CD8-positive, alpha-beta memory T cell (primary cell): ENCODE measurements at regions of chr15 and their contacts with region 1.

Region 1: GRCh38 chr15:101258238-101259144 is 6.6 kb upstream of the CHSY1 start:
- DNase-seq: peak; percentile 27 to 64 (median 45)
- H3K4me3 ChIP-seq: no peak overlapping the region
- H3K4me3 Mint-ChIP-seq: peak overlapping the region in 1 of 7 donors; percentile 28
- H3K27ac ChIP-seq: no peak overlapping the region
- H3K27ac Mint-ChIP-seq: no peak overlapping the region
- H3K4me1 ChIP-seq: no peaks in the 10 kb centered on the region
- H3K4me1 Mint-ChIP-seq: peaks cover 0 to 5% (median 2%) of the 10 kb centered on the region in 3 donors
- H3K27me3 ChIP-seq: no peaks in the 10 kb centered on the region
- H3K27me3 Mint-ChIP-seq: peaks cover 10 to 16% of the 10 kb centered on the region in 2 donors

Region 2: DNA sequence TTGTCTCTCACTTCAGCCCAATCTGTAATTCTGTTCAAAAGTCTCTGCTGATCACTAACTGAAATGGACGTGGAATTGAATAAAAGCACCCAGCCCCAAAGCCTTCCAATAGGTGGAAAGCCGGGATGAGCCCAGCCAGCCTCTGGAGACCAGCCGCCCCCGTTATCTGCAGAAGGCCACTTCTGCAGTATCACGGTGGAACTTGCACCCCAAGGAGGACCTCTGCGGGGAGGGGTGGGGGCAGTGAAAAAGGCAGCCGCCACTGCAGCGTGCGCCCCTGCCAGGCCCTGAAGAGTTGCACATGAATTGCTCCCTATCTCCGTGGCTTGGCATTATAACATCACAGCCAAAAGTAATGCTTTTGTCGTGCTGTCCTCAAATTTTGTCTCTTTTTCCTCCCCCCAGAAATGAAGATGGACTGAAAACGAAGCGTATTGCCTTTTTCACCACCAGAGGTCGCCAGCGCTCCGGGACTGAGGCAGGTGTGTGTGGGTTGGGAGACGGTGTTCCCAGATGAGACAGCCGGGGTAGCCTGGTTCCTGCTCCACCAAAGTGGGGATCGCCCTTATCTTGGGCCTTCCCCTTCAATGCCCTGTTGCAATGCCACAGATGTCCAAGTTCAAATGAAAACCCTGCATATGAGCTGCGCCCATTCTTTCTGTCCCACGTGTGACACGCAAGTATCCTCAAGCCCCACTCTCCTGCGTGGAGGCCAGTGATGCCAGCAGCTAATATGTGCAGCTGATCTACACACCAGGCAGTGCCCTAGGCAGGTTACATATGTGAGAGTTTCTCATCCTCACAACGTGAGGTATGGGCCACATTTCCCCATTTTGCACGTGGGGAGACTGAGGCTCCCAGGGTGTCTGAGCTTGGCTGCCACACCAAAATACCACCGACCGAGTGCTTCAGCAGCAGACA is 243.3 kb before region 1 on chr15:
- CTCF ChIA-PET with region 1: interaction called, 30 read pairs
- POLR2A ChIA-PET with region 1: no interaction called
- DNase-seq: peak; percentile 37 to 73 (median 46)
- H3K4me3 ChIP-seq: no peak overlapping the region
- H3K4me3 Mint-ChIP-seq: no peak overlapping the region
- H3K27ac ChIP-seq: no peak overlapping the region
- H3K27ac Mint-ChIP-seq: peak overlapping the region in 2 of 8 donors; percentile 33 to 65
- H3K4me1 ChIP-seq: no peaks in the 10 kb centered on the region
- H3K4me1 Mint-ChIP-seq: no peaks in the 10 kb centered on the region
- H3K27me3 ChIP-seq: no peaks in the 10 kb centered on the region
- H3K27me3 Mint-ChIP-seq: peaks cover 3 to 11% of the 10 kb centered on the region in 2 donors

Region 3: GRCh38 chr15:101088788-101089583 is 169.5 kb before region 1 on chr15:
- CTCF ChIA-PET with region 1: interaction called, 43 read pairs
- POLR2A ChIA-PET with region 1: no interaction called
- DNase-seq: peak; percentile 64 to 79 (median 69)
- H3K4me3 ChIP-seq: no peak overlapping the region
- H3K4me3 Mint-ChIP-seq: no peak overlapping the region
- H3K27ac ChIP-seq: no peak overlapping the region
- H3K27ac Mint-ChIP-seq: no peak overlapping the region
- H3K4me1 ChIP-seq: no peaks in the 10 kb centered on the region
- H3K4me1 Mint-ChIP-seq: peaks cover 0 to 2% (median 0%) of the 10 kb centered on the region in 3 donors
- H3K27me3 ChIP-seq: no peaks in the 10 kb centered on the region
- H3K27me3 Mint-ChIP-seq: peaks cover 5 to 10% of the 10 kb centered on the region in 2 donors

Region 4: GRCh38 chr15:101127506-101128076 is 130.9 kb before region 1 on chr15:
- CTCF ChIA-PET with region 1: interaction called, 12 read pairs
- POLR2A ChIA-PET with region 1: no interaction called
- DNase-seq: peak in 4 of 5 donors; percentile 11 to 60 (median 30)
- H3K4me3 ChIP-seq: peak overlapping the region; percentile 27
- H3K4me3 Mint-ChIP-seq: peak overlapping the region; percentile 4 to 88 (median 63)
- H3K27ac ChIP-seq: peak overlapping the region; percentile 51
- H3K27ac Mint-ChIP-seq: peak overlapping the region; percentile 88 to 98 (median 94)
- H3K4me1 ChIP-seq: peaks cover 24% of the 10 kb centered on the region
- H3K4me1 Mint-ChIP-seq: peaks cover 48 to 58% (median 52%) of the 10 kb centered on the region in 3 donors
- H3K27me3 ChIP-seq: no peaks in the 10 kb centered on the region
- H3K27me3 Mint-ChIP-seq: peaks cover 0 to 1% of the 10 kb centered on the region in 2 donors

Region 5: DNA sequence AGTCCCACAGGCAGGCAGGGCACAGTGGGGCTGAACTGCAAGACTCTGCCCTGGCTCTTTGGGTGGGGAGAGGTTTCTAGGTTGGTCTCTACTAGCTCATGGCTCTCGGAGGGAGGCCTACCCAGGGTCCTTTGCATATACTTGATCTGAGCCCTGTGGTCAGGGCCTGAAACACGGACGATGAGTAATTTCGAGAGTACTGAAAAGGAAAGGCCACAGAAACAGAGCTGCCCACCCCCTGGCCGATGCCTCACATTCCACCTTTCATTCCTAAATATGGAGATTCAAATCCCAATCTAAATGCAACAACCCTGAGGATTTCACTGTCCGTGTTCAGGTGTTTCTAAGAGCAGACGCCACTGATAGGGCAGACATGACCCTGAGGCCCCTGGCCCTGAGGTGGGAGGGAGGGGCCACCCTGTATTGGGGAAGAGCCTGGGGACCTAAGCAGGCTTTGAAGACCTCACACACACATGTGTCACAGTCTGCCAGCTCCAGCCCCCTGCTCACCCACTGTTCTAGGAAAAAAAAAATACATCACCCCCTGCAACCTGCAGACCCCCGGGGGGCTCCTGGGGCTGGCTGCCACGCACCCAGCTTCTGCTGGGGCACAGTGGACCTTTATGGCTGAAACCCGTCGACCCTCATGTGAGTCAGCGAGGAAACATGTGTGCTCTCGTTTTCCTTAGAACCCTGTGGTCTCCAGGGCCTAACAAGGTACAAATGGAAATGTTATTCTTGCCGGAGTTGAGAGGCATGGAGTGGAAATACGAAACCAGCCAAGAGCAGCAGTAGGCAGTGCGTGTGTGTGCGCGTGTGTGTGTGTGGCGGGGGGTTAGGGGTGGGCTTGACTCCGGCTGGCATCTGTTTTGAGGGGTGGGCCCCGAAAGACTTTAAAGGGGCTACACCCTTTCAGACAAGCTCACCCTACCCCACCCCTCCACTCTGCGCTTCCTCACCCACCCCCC is 119.3 kb before region 1 on chr15:
- CTCF ChIA-PET with region 1: no interaction called
- POLR2A ChIA-PET with region 1: no interaction called
- DNase-seq: peak in 1 of 5 donors; percentile 8
- H3K4me3 ChIP-seq: no peak overlapping the region
- H3K4me3 Mint-ChIP-seq: peak overlapping the region in 1 of 7 donors; percentile 33
- H3K27ac ChIP-seq: no peak overlapping the region
- H3K27ac Mint-ChIP-seq: peak overlapping the region in 2 of 8 donors; percentile 31 to 39
- H3K4me1 ChIP-seq: peaks cover 12% of the 10 kb centered on the region
- H3K4me1 Mint-ChIP-seq: peaks cover 25 to 32% (median 31%) of the 10 kb centered on the region in 3 donors
- H3K27me3 ChIP-seq: no peaks in the 10 kb centered on the region
- H3K27me3 Mint-ChIP-seq: peaks cover 0 to 4% of the 10 kb centered on the region in 2 donors

Region 6: GRCh38 chr15:101242160-101242998 is 16.1 kb before region 1 on chr15:
- CTCF ChIA-PET with region 1: interaction called, 38 read pairs
- POLR2A ChIA-PET with region 1: interaction called, 6 read pairs
- DNase-seq: peak; percentile 61 to 84 (median 81)
- H3K4me3 ChIP-seq: peak overlapping the region; percentile 40
- H3K4me3 Mint-ChIP-seq: peak overlapping the region; percentile 63 to 92 (median 81)
- H3K27ac ChIP-seq: peak overlapping the region; percentile 15
- H3K27ac Mint-ChIP-seq: peak overlapping the region; percentile 72 to 99 (median 94)
- H3K4me1 ChIP-seq: peaks cover 74% of the 10 kb centered on the region
- H3K4me1 Mint-ChIP-seq: peaks cover 86 to 98% (median 94%) of the 10 kb centered on the region in 3 donors
- H3K27me3 ChIP-seq: no peaks in the 10 kb centered on the region
- H3K27me3 Mint-ChIP-seq: no peaks in the 10 kb centered on the region

Region 7: DNA sequence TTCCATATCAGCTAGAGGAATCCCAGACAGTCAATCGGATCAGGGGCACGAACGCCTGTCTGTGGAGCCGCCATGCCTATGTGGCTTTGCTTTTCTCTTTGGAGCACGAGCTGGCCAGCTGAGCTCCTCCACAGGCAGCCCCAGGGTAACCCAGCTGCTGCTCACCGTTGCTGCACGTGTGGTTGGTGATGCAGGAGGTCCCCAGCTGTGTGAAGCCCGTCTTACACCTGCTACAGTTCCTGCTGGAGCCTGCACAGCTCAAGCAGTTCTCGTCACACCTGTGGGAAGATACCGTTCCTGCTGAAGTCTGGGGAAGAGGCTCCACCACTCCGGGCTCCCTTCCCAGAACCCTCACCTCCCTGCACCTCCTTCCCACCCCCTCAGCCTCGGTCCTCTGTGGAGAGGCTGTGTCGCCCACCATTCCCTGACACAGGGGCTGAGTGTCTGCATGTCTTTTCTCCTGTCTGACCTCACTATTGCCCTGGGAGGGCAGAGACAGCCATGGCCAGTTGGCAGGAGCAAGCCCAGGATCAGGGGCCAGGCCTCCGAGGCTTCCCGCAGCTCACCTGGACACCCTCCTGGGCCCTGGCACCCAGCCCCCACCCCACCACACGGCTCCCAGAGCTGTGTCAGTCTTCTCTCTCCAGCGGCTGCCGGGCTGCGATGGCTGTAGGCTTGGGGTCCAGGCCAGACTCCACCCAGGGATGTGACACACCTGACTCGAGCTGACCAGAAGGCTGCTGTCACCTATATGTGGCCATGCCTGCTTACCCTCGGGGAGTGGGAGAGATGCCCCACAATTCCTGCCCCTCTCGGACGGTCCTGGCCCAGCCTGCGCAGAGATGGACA is 48.8 kb after region 1 on chr15:
- CTCF ChIA-PET with region 1: no interaction called
- POLR2A ChIA-PET with region 1: no interaction called
- DNase-seq: no peak
- H3K4me3 ChIP-seq: no peak overlapping the region
- H3K4me3 Mint-ChIP-seq: no peak overlapping the region
- H3K27ac ChIP-seq: no peak overlapping the region
- H3K27ac Mint-ChIP-seq: peak overlapping the region in 1 of 8 donors; percentile 41
- H3K4me1 ChIP-seq: no peaks in the 10 kb centered on the region
- H3K4me1 Mint-ChIP-seq: no peaks in the 10 kb centered on the region
- H3K27me3 ChIP-seq: no peaks in the 10 kb centered on the region
- H3K27me3 Mint-ChIP-seq: peaks cover 0 to 7% of the 10 kb centered on the region in 2 donors

Region 8: GRCh38 chr15:101372149-101372577 is 113.7 kb after region 1 on chr15:
- CTCF ChIA-PET with region 1: no interaction called
- POLR2A ChIA-PET with region 1: no interaction called
- DNase-seq: no peak
- H3K4me3 ChIP-seq: no peak overlapping the region
- H3K4me3 Mint-ChIP-seq: no peak overlapping the region
- H3K27ac ChIP-seq: no peak overlapping the region
- H3K27ac Mint-ChIP-seq: no peak overlapping the region
- H3K4me1 ChIP-seq: no peaks in the 10 kb centered on the region
- H3K4me1 Mint-ChIP-seq: peaks cover 0 to 2% (median 2%) of the 10 kb centered on the region in 3 donors
- H3K27me3 ChIP-seq: peaks cover 4% of the 10 kb centered on the region
- H3K27me3 Mint-ChIP-seq: peaks cover 2 to 27% of the 10 kb centered on the region in 2 donors

Region 9: DNA sequence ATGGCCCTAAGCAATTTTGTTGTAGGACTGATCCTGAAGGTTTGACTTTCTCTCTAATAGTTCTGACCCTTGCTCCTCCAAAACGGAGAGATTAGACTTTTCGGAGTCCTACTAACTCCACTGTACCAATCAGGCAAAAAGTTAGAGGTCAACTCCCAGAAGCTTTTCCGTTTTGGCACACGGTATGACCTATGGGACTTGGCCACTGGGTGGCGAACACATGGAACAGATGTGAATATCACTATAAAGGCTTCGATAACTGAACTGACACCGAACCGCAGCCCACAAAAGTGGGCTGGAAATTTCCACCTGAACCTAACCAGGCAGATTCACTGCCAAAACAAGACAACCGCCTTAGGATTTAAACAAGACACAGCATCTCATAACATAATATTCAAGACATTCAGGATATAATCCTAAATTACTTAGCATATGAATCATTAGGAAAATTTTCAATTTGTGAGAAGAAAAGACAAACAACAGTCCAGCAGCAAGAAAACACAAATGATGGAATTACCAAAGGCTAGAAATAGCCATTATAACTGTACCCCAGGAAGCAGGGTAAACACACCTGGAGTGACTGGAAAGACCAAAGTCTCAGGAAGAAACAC is 405.9 kb after region 1 on chr15:
- CTCF ChIA-PET with region 1: no interaction called
- POLR2A ChIA-PET with region 1: no interaction called
- DNase-seq: no peak
- H3K4me3 ChIP-seq: no peak overlapping the region
- H3K4me3 Mint-ChIP-seq: no peak overlapping the region
- H3K27ac ChIP-seq: no peak overlapping the region
- H3K27ac Mint-ChIP-seq: peak overlapping the region in 2 of 8 donors; percentile 32 to 67
- H3K4me1 ChIP-seq: no peaks in the 10 kb centered on the region
- H3K4me1 Mint-ChIP-seq: no peaks in the 10 kb centered on the region
- H3K27me3 ChIP-seq: no peaks in the 10 kb centered on the region
- H3K27me3 Mint-ChIP-seq: no peaks in the 10 kb centered on the region